Activated CD8-positive, alpha-beta T cell treated with anti-CD3 and anti-CD28 coated beads, Interleukin-2, amount 10 ng/mL, durations not matched to agents 7 days and 5 days (primary cell): ENCODE measurements at regions of chr1 and their contacts with region 1.

Region 1: DNA sequence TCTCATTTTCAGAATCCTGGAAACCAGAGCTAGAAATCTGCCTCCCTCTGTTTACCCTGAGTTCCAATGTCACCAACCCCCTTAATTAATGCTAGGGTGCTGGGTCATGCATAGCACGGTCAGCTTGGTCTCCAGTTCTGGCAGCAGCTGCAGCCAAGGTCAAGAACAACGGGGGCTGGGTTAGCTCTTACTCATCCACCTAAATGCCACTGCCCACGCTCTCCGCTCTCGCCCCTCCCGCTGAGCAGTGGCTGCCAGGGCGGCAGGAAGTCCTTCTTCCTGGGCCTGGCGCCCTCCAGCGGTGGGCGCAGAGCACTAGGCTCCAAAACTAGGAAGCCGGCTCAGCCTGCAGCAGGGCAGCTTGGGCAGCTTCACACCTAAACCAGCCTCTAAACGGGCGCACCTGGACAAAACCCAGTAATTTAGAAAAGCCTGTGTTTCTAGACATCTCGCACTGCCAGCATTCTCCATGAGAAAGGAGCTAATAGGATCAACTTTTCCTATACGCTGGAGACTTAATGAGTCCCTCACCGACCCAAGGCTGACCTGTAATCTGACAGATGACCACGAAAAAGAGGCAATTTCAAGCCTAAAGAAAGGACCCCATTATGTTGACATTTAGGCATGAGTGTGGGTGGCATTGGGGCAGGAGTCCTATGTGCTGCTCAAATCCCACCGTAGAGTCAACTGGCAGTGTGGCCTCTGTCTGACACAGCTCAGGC is 78.3 kb upstream of the LRRN2 start:
- DNase-seq: peak; percentile 79
- ATAC-seq: peak; percentile 97
- H3K4me3 Mint-ChIP-seq: peak overlapping the region; percentile 32
- H3K27ac Mint-ChIP-seq: no peak overlapping the region
- H3K4me1 Mint-ChIP-seq: peaks cover 9% of the 10 kb centered on the region
- H3K27me3 Mint-ChIP-seq: peaks cover 39% of the 10 kb centered on the region

Region 2: DNA sequence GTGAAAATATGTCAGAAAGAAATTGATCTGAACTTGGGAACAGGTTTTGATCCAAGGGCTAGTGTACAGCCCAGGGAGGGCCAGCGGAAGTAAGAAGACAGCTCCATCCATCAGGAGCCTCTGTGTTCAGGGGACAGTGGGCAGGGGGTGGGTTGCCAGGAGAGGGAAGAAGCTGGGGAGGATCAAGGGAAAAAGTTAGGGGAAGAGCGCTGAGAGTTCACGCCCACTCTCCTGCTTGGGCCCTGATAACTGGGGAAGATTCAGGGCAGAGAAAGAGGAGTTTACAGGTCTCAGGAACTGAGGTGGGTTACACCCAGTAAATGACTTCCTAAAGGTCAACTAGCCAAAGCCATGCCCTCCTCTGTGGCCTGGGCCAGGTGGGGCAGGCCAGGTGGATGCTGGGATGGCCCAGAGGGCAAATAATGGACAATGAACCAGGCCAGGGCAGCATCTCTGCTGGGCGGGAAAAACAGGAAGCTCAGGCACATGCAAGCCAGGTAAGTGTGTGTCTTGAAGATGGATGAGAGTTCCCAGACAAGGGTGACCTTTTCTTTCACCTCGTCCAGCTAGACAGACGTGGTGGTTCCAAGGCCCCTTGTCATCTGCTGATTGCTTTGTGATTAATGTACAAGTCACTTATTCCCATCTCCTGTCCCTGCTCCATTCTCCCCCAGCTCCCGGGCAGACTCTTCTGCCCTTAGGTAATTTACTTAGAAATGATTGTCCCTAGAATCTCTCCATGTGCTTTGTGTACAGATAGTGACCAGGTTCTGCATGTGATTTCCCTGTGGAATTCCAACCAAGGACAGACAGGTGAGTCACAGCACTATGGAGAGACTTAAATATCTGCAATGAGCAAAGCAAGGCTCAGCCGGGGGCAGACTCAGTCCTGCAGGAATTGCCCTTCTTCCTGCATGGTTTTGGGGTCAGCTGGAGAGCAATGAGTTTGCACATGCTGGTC is 190.7 kb before region 1 on chr1:
- CTCF ChIA-PET with region 1: interaction called, 147 read pairs
- POLR2A ChIA-PET with region 1: no interaction called
- DNase-seq: no peak
- ATAC-seq: no peak
- H3K4me3 Mint-ChIP-seq: no peak overlapping the region
- H3K27ac Mint-ChIP-seq: no peak overlapping the region
- H3K4me1 Mint-ChIP-seq: peaks cover 11% of the 10 kb centered on the region
- H3K27me3 Mint-ChIP-seq: no peaks in the 10 kb centered on the region

Region 3: DNA sequence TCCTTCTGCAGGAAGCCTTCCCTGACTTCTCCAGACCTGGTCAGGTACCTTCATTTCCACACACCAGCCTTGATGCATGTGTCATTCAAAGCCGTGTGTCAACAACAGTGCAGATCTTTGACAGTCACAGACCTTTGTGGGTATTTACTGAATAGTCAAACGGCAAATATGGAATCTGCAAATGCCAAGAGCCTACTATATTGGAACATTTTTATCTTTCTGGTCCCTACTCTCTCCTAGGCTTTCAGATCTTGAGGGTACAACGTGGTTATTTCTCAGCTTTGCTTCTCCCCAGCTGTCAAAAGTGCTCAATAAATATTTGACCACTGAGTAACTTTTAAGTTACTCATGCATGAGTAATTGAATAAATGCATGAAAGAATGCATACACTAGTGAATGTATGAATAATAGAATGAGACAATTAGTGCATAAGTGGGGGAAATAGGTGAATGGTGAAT is 172.2 kb before region 1 on chr1:
- CTCF ChIA-PET with region 1: interaction called, 10 read pairs
- POLR2A ChIA-PET with region 1: no interaction called
- DNase-seq: no peak
- ATAC-seq: no peak
- H3K4me3 Mint-ChIP-seq: no peak overlapping the region
- H3K27ac Mint-ChIP-seq: no peak overlapping the region
- H3K4me1 Mint-ChIP-seq: no peaks in the 10 kb centered on the region
- H3K27me3 Mint-ChIP-seq: no peaks in the 10 kb centered on the region

Region 4: DNA sequence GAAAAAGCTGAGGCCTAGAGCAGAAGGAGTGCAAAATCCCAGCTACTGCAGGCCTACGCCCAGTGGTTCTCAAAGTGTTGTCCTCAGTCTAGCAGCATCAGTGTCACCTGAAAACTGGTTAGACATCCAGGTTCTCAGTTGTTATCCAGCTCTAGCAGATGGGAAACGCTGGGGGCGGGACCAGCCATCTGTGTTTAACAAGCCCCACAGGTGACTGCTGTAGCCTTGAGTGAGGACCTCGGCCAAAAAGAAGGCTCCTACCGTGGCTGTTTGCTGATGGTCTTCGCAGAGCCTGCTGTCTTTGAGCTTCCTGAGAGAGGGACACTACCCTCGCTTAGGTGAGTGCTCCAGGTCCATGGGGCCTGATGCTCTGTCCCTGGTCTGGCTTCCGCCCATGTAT is 148.0 kb before region 1 on chr1:
- CTCF ChIA-PET with region 1: interaction called, 10 read pairs
- POLR2A ChIA-PET with region 1: no interaction called
- DNase-seq: no peak
- ATAC-seq: no peak
- H3K4me3 Mint-ChIP-seq: no peak overlapping the region
- H3K27ac Mint-ChIP-seq: no peak overlapping the region
- H3K4me1 Mint-ChIP-seq: no peaks in the 10 kb centered on the region
- H3K27me3 Mint-ChIP-seq: no peaks in the 10 kb centered on the region

Region 5: DNA sequence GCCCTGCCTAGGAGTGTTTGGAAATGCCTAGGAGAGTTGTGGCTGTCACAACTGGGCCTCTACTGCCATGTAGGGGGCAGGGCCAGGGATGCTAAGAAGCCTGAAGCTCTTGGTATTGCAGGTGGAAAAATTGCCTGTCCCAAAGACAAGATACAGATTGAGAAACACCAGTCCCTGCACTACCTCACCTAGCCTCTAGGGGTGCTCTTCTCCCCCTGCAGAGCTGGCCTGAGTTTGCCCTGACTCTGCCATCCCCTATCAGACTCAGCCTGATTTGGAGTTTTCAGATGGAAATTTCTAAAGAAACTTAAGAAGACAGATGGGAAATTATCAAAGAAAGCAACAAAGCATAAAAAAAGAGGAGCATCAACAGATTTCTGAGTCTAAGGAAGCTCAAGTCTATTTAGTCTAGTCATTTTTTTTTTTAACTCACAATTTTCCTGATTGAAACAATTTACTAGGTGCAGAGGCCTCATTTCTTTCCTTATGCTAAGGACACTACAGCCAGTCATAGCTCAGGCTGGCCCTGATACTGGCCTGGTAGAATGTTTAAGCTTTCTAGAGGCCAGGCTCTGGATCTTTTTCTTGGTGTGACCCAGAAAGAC is 16.9 kb before region 1 on chr1:
- CTCF ChIA-PET with region 1: interaction called, 42 read pairs
- POLR2A ChIA-PET with region 1: no interaction called
- DNase-seq: peak; percentile 65
- ATAC-seq: peak; percentile 88
- H3K4me3 Mint-ChIP-seq: no peak overlapping the region
- H3K27ac Mint-ChIP-seq: no peak overlapping the region
- H3K4me1 Mint-ChIP-seq: no peaks in the 10 kb centered on the region
- H3K27me3 Mint-ChIP-seq: peaks cover 18% of the 10 kb centered on the region

Region 6: DNA sequence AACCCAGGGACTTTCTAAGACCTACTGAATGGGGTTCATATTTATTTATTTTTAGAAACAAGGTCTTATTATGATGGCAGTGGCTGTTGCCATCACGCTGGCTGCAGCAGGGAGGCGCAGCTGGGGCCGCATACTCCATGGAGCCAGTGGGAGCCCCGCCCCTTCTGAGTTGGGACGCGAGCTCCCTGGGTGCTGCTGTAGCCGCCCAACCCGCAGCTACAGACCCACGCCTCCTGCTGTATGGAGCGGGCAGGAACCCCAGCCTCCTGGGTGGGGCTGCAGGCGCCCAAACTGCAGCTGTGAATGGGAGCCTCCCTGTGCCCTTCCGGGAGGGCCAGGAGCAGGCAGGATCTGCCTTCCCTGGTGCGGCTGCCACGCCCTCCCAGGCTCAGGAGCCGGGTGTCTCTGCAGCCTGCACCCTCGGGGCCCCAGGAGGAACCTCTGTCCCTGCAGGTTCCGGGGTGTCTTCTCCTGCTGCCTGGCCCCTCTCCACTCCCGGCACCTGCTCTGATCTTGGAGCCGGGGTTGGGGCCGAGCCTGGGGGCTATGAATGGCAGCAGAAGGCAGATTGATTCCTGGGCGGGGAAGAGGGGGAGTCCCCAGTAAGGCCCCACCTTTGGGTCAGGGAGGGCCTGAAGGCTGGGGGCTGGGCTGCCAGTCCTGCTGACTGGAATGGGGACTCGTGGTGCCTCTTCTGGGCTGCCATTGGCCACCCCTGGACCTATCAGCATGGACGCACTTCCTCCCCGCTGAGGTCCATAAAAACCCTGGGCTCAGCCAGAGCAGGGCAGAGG is 11.8 kb before region 1 on chr1:
- CTCF ChIA-PET with region 1: interaction called, 42 read pairs
- POLR2A ChIA-PET with region 1: no interaction called
- DNase-seq: no peak
- ATAC-seq: no peak
- H3K4me3 Mint-ChIP-seq: no peak overlapping the region
- H3K27ac Mint-ChIP-seq: no peak overlapping the region
- H3K4me1 Mint-ChIP-seq: no peaks in the 10 kb centered on the region
- H3K27me3 Mint-ChIP-seq: peaks cover 12% of the 10 kb centered on the region

Region 7: GRCh38 chr1:204791453-204792353 is 27.8 kb after region 1 on chr1:
- CTCF ChIA-PET with region 1: interaction called, 29 read pairs
- POLR2A ChIA-PET with region 1: no interaction called
- DNase-seq: peak; percentile 88
- ATAC-seq: peak; percentile 98
- H3K4me3 Mint-ChIP-seq: no peak overlapping the region
- H3K27ac Mint-ChIP-seq: no peak overlapping the region
- H3K4me1 Mint-ChIP-seq: peaks cover 2% of the 10 kb centered on the region
- H3K27me3 Mint-ChIP-seq: peaks cover 26% of the 10 kb centered on the region

Region 8: DNA sequence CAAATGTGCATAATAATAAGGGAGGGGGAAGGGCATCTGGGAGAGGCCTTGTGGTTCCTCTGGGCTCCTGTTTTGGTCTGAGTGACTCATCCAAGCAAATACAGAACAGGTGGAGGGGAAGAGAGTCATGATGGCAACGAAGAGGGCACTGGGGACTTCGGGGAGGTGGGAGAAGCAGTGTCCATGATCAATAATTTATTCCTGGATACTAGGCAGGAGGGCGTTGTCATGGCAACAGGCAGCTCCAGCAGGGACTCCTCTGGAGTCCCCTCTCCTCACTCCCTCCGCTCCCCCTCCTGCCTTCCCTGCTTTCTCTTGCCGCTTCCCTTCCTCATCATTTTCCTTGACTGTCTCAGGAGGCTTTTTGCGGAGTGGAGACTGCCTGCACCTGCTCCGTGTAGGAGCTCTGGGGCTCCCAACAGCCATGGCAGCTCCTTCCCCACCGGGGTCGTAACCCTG is 94.5 kb after region 1 on chr1:
- CTCF ChIA-PET with region 1: no interaction called
- POLR2A ChIA-PET with region 1: no interaction called
- DNase-seq: no peak
- ATAC-seq: no peak
- H3K4me3 Mint-ChIP-seq: no peak overlapping the region
- H3K27ac Mint-ChIP-seq: no peak overlapping the region
- H3K4me1 Mint-ChIP-seq: no peaks in the 10 kb centered on the region
- H3K27me3 Mint-ChIP-seq: peaks cover 29% of the 10 kb centered on the region